Activated CD4-positive, alpha-beta T cell treated with anti-CD3 and anti-CD28 coated beads for 36 hours (primary cell): ENCODE measurements at regions of chr21 and their contacts with region 1.

Region 1: GRCh38 chr21:31173881-31174555 is 135.7 kb upstream of the KRTAP19-8 start:
- DNase-seq: peak; percentile 83
- ATAC-seq: peak; percentile 56
- H3K4me3 Mint-ChIP-seq: peak overlapping the region; percentile 59
- H3K27ac Mint-ChIP-seq: peak overlapping the region; percentile 89
- H3K4me1 Mint-ChIP-seq: peaks cover 89% of the 10 kb centered on the region
- H3K27me3 Mint-ChIP-seq: no peaks in the 10 kb centered on the region

Region 2: GRCh38 chr21:31161157-31161556 is 12.9 kb before region 1 on chr21:
- CTCF ChIA-PET with region 1: interaction called, 11 read pairs
- POLR2A ChIA-PET with region 1: no interaction called
- intact Hi-C with region 1: no loop called
- DNase-seq: peak; percentile 53
- ATAC-seq: peak; percentile 65
- H3K4me3 Mint-ChIP-seq: no peak overlapping the region
- H3K27ac Mint-ChIP-seq: peak overlapping the region; percentile 79
- H3K4me1 Mint-ChIP-seq: peaks cover 87% of the 10 kb centered on the region
- H3K27me3 Mint-ChIP-seq: no peaks in the 10 kb centered on the region

Region 3: DNA sequence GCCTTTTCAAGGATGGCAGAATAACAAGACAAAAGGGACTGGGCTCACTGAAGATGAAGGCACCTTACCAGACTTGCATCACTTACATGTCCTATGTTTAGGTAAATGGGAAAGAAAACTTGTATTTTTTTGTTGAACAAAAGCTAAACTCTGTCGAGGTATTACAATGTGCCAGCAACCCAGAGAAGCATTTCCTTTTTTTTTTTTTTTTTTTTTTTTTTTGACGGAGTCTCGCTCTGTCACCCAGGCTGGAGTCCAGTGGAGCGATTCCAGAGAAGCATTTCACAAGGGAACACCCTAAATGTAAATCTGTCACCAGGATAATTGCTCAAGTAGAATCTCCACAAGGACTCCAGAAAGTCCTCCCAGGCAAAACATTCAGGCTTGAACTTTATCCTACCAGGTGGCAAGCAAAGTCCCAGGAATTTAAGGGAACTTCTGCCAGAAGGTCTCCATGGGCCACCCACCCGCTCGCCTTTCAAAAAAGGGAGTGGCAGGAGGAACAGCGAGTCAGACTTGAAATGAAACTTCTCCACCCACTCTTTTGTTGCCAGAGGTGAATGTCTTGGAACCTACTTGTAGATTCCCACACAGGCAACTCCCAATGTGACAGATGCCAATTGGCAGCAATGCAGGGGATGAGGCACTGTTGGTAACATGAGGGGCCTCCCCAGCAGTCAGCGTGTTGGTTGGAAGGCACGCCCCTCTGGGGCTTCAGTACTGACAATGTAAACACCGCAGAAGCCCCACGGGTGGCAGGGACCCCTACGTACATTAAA is 45.0 kb after region 1 on chr21:
- CTCF ChIA-PET with region 1: no interaction called
- POLR2A ChIA-PET with region 1: no interaction called
- intact Hi-C with region 1: no loop called
- DNase-seq: peak; percentile 30
- ATAC-seq: peak; percentile 44
- H3K4me3 Mint-ChIP-seq: no peak overlapping the region
- H3K27ac Mint-ChIP-seq: no peak overlapping the region
- H3K4me1 Mint-ChIP-seq: peaks cover 15% of the 10 kb centered on the region
- H3K27me3 Mint-ChIP-seq: no peaks in the 10 kb centered on the region